ENCODE measurements at regions of chr11 and their contacts with region 1.

Region 1: DNA sequence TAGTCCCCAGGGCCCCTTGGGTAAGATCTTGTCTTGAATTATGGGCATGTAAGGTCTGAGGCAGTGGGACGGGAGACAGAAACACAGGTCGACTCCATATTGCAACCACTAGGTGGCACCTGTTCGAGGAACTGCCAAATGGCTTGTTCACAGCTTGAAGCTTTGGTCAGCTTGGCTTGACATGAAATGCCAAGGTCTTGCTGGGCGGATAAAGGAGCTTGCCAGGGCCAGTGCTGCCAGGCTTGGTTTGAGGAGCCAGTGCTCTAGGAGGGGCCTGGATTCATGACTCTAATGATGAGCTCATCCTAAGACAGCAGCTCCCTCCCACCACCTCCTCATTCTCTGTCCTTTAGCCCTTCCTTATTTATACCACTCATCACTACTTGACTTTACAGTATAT is 11.9 kb upstream of the NRIP3 start:
- DNase-seq: peak; percentile 56
- ATAC-seq: peak; percentile 92
- H3K4me3 ChIP-seq: no peak overlapping the region
- H3K27ac ChIP-seq: no peak overlapping the region
- H3K4me1 ChIP-seq: no peaks in the 10 kb centered on the region
- H3K27me3 ChIP-seq: peaks cover 0 to 17% of the 10 kb centered on the region in 2 experiments; a peak in 4 of 5 replicates
- CTCF ChIP-seq: peak; percentile 86
- EP300 ChIP-seq: no peak
- POLR2A ChIP-seq: no peak
- RAD21 ChIP-seq: peak; percentile 53

Region 2: DNA sequence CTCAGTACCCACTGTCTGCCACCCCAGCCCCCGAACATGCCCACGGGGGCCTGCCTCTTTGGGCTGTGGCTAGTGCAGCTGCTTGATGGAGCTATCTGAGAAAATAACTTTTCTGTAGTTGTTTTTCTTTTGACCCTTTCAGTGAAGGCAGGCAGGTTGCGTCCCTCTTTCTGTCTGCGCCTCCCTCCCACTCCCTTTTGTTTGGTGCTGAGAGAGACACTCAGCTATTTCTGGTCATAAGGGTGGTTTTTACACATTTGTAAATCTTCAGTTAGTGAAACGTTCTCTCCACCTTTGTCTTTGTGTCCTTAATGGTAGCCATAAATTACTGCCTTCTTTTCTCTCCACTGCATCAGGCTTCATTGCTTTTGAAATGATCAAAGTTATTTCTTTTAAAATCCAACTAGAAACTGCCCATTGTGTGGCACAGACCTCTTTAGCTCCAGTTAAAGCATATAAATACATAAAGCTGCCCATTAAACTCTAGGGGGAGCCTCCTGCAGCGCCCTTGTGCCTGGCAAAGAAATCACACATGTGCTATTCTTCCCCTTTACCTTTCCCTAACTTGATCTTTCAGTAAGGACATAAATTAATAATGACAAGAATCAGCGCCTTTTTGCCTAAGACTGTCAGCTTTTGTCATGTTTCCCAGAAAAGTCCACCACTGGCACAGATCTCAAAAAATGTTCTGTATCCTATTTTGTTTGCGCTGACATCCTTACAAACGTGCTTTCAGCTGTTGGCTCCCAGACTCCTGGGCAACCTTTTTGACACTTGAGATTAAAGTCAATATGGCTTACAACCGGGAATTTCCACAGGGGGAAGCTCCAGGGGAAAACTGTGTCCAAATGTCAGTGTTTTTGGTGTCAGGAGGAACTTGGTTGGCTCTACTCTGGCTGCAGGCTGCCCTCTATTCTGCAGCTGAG is 77.4 kb after region 1 on chr11:
- CTCF ChIA-PET with region 1: interaction called, 3 read pairs
- POLR2A ChIA-PET with region 1: no interaction called
- in situ Hi-C with region 1: no loop called
- intact Hi-C with region 1: loop called (anchors 10 kb)
- DNase-seq: no peak
- ATAC-seq: 0 out of 3 replicates have a peak, but pooled peaks have one; percentile 32
- H3K4me3 ChIP-seq: no peak overlapping the region
- H3K27ac ChIP-seq: no peak overlapping the region
- H3K4me1 ChIP-seq: peaks cover 12% of the 10 kb centered on the region
- H3K27me3 ChIP-seq: peaks cover 1 to 60% of the 10 kb centered on the region in 2 experiments
- CTCF ChIP-seq: 0 out of 2 replicates have a peak, but pooled peaks have one; percentile 15
- EP300 ChIP-seq: no peak
- POLR2A ChIP-seq: no peak
- RAD21 ChIP-seq: no peak

Region 3: GRCh38 chr11:9130297-9130696 is 114.6 kb after region 1 on chr11:
- CTCF ChIA-PET with region 1: no interaction called
- POLR2A ChIA-PET with region 1: no interaction called
- in situ Hi-C with region 1: loop called (anchors 5 kb)
- intact Hi-C with region 1: no loop called
- DNase-seq: no peak
- ATAC-seq: no peak
- H3K4me3 ChIP-seq: no peak overlapping the region
- H3K27ac ChIP-seq: no peak overlapping the region
- H3K4me1 ChIP-seq: no peaks in the 10 kb centered on the region
- H3K27me3 ChIP-seq: no peaks in the 10 kb centered on the region
- CTCF ChIP-seq: no peak
- EP300 ChIP-seq: no peak
- POLR2A ChIP-seq: no peak
- RAD21 ChIP-seq: no peak

Region 4: DNA sequence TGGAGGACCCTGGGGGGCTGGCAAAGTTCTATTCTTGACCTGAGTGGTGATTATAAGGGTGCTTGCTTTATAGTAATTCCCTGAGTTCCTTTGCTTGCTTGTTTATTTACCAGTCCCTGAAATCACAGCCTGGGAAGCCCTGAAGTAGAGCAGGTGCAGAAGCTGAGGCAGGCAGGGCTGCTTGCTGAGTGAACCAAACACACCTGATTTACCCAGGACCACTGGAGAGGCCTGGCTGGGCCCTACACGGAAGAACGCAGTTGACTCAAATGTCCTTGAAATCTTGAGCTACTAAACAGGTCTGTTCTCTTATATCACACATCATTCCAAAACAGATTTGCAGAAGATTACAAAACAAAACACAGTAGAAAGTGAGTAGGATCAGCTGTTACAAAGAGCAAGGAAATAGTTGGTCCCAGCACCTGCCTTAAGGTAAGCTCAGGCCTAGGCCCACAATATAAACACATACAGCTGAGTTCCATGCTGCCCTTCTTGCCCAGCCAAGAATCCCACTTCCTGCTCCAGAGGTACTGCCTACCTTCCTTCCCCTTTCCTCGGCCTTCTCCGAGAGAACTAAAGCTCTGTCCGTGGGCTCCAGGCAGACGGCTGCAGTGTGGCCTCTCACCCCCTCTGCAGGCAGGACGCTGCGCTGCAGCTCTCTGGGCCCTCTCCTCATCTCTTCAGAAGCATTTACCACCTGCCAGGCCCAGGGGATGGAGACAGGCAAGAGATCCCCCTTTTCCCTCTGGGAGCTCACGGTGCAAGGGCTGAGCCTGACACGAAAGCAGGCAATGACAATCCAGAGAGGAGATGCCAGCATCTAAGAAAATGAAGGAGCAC is 121.8 kb after region 1 on chr11:
- CTCF ChIA-PET with region 1: interaction called, 19 read pairs
- POLR2A ChIA-PET with region 1: no interaction called
- in situ Hi-C with region 1: loop called (anchors 5 kb)
- intact Hi-C with region 1: loop called (anchors 1 kb)
- DNase-seq: peak; percentile 39
- ATAC-seq: peak; percentile 97
- H3K4me3 ChIP-seq: no peak overlapping the region
- H3K27ac ChIP-seq: no peak overlapping the region
- H3K4me1 ChIP-seq: peaks cover 20% of the 10 kb centered on the region; the same call in 1 of the 2 replicates
- H3K27me3 ChIP-seq: no peaks in the 10 kb centered on the region
- CTCF ChIP-seq: peak; percentile 95
- EP300 ChIP-seq: no peak
- POLR2A ChIP-seq: no peak
- RAD21 ChIP-seq: peak; percentile 86